Endothelial cell of umbilical vein (primary cell): ENCODE measurements at regions of chr5 and their contacts with region 1.

Region 1: DNA sequence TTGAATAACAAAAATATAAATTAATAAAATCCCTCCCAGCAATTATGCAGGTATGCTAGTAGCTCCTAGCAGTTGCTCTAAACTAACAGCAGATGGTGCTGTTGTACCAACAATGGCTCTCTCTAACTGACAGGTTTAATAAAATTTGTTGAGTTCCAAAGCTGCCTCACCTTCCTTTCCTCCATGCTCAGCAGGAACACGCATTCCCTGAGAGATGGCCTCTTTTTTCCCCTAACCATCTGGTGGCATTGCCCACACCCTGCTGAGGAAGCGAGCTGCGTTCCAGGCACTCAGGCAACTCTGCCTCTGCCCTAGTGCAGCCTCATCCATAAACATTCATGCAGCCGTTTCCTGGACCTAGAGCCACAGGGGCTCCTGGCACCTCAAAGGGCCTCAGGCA is 106.2 kb downstream of the KLHL3 start:
- DNase-seq: peak; percentile 60
- H3K4me3 ChIP-seq: no peak overlapping the region
- H3K27ac ChIP-seq: no peak overlapping the region
- H3K4me1 ChIP-seq: peaks cover 3% of the 10 kb centered on the region
- H3K27me3 ChIP-seq: no peaks in the 10 kb centered on the region
- CTCF ChIP-seq: peak; percentile 62 to 76
- POLR2A ChIP-seq: no peak

Region 2: DNA sequence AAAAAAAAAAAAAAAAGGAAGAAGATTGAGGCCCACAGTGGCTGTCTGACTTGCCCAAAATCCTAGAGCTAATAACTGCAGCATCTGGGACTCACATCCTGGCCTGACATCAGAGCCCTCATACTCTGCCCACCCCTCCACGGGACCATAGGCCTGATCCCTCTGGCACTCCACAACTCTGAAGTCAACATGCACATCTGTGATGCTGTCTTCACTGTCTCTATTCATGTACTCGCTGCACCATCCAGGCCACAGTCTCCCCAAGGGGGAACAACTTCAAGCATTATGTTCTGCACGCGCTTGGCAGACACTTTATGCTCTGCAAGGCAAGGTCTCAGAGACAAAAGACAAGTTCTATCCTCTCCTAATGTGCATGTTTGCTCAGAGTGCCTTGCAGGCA is 288.8 kb before region 1 on chr5:
- CTCF ChIA-PET with region 1: no interaction called
- POLR2A ChIA-PET with region 1: no interaction called
- dilution Hi-C with region 1: no loop called
- intact Hi-C with region 1: no loop called
- DNase-seq: no peak
- H3K4me3 ChIP-seq: no peak overlapping the region
- H3K27ac ChIP-seq: no peak overlapping the region
- H3K4me1 ChIP-seq: peaks cover 41% of the 10 kb centered on the region
- H3K27me3 ChIP-seq: no peaks in the 10 kb centered on the region
- CTCF ChIP-seq: no peak
- POLR2A ChIP-seq: no peak

Region 3: GRCh38 chr5:137619191-137619870 is 10.3 kb before region 1 on chr5:
- CTCF ChIA-PET with region 1: interaction called, 30 read pairs
- POLR2A ChIA-PET with region 1: no interaction called
- dilution Hi-C with region 1: no loop called
- intact Hi-C with region 1: no loop called
- DNase-seq: no peak
- H3K4me3 ChIP-seq: no peak overlapping the region
- H3K27ac ChIP-seq: no peak overlapping the region
- H3K4me1 ChIP-seq: no peaks in the 10 kb centered on the region
- H3K27me3 ChIP-seq: no peaks in the 10 kb centered on the region
- CTCF ChIP-seq: no peak
- POLR2A ChIP-seq: no peak

Region 4: DNA sequence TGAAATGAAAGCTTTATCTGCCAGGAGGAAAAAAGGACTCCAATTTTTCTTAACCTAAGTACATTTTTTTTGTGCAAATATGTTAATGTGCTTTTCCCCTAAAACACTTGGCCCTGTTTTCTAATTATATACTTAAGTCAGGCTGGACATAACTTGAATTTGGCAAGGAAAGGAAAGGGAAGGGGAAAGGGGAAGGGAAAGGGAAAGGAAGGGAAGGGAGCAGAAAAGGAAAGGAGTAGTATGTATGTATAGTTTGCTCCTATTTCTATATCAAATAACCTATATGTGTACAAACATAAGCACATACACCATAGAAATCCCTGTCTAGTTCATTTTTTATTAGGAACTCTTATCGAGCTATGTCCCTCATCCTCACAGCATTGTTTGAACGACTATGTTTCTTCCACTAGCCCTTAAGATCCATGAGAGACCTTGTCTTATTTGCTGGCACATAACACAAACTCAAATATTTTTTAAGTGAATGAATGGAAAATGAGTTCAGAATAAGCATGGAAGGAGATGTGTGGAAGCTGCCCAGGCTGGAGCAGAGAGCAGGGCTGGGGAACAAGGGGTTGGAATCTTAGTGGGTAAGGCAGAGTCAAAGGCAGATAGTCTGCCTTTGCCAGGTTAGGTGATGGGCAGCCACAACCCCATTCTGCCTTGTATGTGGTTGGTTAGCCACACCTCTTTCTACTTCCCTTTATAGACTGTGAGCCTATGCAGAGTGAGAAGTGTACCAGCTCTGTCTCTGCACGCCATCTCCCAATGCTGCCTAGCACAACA is 36.2 kb after region 1 on chr5:
- CTCF ChIA-PET with region 1: interaction called, 121 read pairs
- POLR2A ChIA-PET with region 1: no interaction called
- dilution Hi-C with region 1: no loop called
- intact Hi-C with region 1: no loop called
- DNase-seq: peak; percentile 15
- H3K4me3 ChIP-seq: no peak overlapping the region
- H3K27ac ChIP-seq: no peak overlapping the region
- H3K4me1 ChIP-seq: no peaks in the 10 kb centered on the region
- H3K27me3 ChIP-seq: no peaks in the 10 kb centered on the region
- CTCF ChIP-seq: no peak
- POLR2A ChIP-seq: no peak

Region 5: GRCh38 chr5:137728048-137728447 is 98.4 kb after region 1 on chr5:
- CTCF ChIA-PET with region 1: interaction called, 25 read pairs
- POLR2A ChIA-PET with region 1: no interaction called
- dilution Hi-C with region 1: no loop called
- intact Hi-C with region 1: no loop called
- DNase-seq: peak; percentile 43
- H3K4me3 ChIP-seq: no peak overlapping the region
- H3K27ac ChIP-seq: no peak overlapping the region
- H3K4me1 ChIP-seq: no peaks in the 10 kb centered on the region
- H3K27me3 ChIP-seq: no peaks in the 10 kb centered on the region
- CTCF ChIP-seq: peak in 1 of 2 donors; percentile 21
- POLR2A ChIP-seq: no peak

Region 6: GRCh38 chr5:137754126-137754960 is 124.7 kb after region 1 on chr5 and contains the start of gene HNRNPA0:
- CTCF ChIA-PET with region 1: interaction called, 20 read pairs
- POLR2A ChIA-PET with region 1: interaction called, 5 read pairs
- dilution Hi-C with region 1: no loop called
- intact Hi-C with region 1: no loop called
- DNase-seq: peak; percentile 98
- H3K4me3 ChIP-seq: peak within 1 kb of the TSS; percentile 88 to 99 (median 94)
- H3K27ac ChIP-seq: peak within 1 kb of the TSS; percentile 92
- H3K4me1 ChIP-seq: peaks cover 18% of the 10 kb centered on the region
- H3K27me3 ChIP-seq: peaks cover 0 to 2% of the 10 kb centered on the region in 2 experiments
- CTCF ChIP-seq: no peak
- POLR2A ChIP-seq: peak; percentile 97
- total RNA-seq, gene HNRNPA0: 37.5 and 37.9 TPM in 2 replicates

Region 7: GRCh38 chr5:138065102-138065501 is 435.5 kb after region 1 on chr5:
- CTCF ChIA-PET with region 1: interaction called, 61 read pairs
- POLR2A ChIA-PET with region 1: no interaction called
- dilution Hi-C with region 1: no loop called
- intact Hi-C with region 1: loop called (anchors 1 kb)
- DNase-seq: no peak
- H3K4me3 ChIP-seq: no peak overlapping the region
- H3K27ac ChIP-seq: no peak overlapping the region
- H3K4me1 ChIP-seq: no peaks in the 10 kb centered on the region
- H3K27me3 ChIP-seq: no peaks in the 10 kb centered on the region
- CTCF ChIP-seq: peak; percentile 16 to 44
- POLR2A ChIP-seq: no peak